Right ventricle myocardium inferior (tissue), 1 donor: ENCODE measurements at regions of chr3 and their contacts with region 1.

Region 1: GRCh38 chr3:19885468-19885867 is 48.5 kb downstream of the EFHB start:
- DNase-seq: no peak
- ATAC-seq: no peak

Region 2: GRCh38 chr3:19825193-19825592 is 60.3 kb before region 1 on chr3:
- intact Hi-C with region 1: no loop called
- DNase-seq: no peak
- ATAC-seq: no peak

Region 3: GRCh38 chr3:19946832-19947548 is 61.5 kb after region 1 on chr3 and contains the start of gene RAB5A:
- intact Hi-C with region 1: loop called (anchors 2 kb)
- DNase-seq: peak; percentile 99
- ATAC-seq: peak; percentile 98
- total RNA-seq, gene RAB5A: 48.2 TPM

Region 4: GRCh38 chr3:20028818-20029430 is 143.5 kb after region 1 on chr3:
- intact Hi-C with region 1: no loop called
- DNase-seq: no peak
- ATAC-seq: no peak

Region 5: GRCh38 chr3:20136231-20136630 is 250.8 kb after region 1 on chr3:
- intact Hi-C with region 1: loop called (anchors 5 kb)
- DNase-seq: no peak
- ATAC-seq: no peak